ENCODE measurements at regions of chr1 and their contacts with region 1.

Region 1: GRCh38 chr1:61588736-61589672 is 135.9 kb downstream of the TM2D1 start:
- DNase-seq: peak; percentile 81
- ATAC-seq: peak; percentile 97
- H3K4me3 Mint-ChIP-seq: no peak overlapping the region
- H3K27ac Mint-ChIP-seq: no peak overlapping the region
- H3K4me1 Mint-ChIP-seq: no peaks in the 10 kb centered on the region
- H3K27me3 Mint-ChIP-seq: peaks cover 5% of the 10 kb centered on the region

Region 2: DNA sequence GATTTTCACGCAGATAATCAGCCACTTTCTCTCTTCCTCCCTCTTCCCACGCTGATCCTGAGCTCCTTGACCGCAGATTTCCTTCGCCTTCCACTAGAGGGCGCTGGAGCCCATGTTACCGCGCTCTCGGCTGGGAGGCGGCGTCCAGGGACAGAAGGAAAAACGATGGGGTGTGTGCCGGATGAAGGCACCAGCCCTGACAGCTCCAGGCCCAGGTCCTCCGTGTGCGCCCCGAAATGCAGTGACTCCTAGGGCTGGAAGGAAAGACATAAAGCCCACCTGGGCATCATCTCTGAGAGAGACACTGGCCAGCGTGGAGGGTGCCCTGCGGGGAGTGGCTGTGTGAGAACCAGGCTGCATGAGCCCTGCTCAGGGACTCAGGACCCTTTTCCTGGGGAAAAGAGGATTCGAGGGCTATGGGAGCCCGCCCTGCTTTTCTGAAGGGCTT is 1617.5 kb before region 1 on chr1:
- CTCF ChIA-PET with region 1: no interaction called
- POLR2A ChIA-PET with region 1: no interaction called
- intact Hi-C with region 1: loop called in 1 of 2 experiments (anchors 5 kb)
- DNase-seq: peak; percentile 74
- ATAC-seq: peak; percentile 47
- H3K4me3 Mint-ChIP-seq: no peak overlapping the region
- H3K27ac Mint-ChIP-seq: no peak overlapping the region
- H3K4me1 Mint-ChIP-seq: peaks cover 5% of the 10 kb centered on the region
- H3K27me3 Mint-ChIP-seq: peaks cover 21% of the 10 kb centered on the region

Region 3: DNA sequence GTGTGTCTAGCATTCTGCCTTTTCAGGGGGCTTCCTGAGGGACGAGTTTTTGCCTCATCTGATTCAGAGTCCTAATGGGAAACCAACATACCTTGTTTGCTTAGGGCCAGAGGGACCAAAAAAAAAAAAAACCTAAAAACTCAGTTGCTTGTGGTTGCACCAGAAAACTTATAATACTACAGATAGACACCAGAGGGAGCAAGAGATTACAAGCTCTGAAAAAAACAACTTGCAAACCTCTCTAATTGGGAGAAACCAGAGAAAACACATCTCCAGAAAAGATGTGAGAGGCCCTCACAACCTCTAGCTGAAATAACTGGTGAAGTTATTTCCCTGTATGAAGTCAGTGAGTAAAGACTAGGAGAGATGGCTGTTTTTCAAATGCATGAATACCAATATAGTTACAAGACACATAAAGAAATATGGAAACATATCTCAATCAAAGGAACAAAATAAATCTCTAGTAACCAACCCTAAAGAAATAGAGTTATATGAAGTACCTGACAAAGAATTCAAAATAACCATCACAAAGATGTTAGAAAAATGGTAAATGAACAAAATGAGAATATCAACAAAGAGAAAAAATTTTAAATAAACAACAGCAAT is 740.3 kb before region 1 on chr1:
- CTCF ChIA-PET with region 1: interaction called, 5 read pairs
- POLR2A ChIA-PET with region 1: no interaction called
- intact Hi-C with region 1: loop called (anchors 1 to 5 kb)
- DNase-seq: no peak
- ATAC-seq: no peak
- H3K4me3 Mint-ChIP-seq: no peak overlapping the region
- H3K27ac Mint-ChIP-seq: no peak overlapping the region
- H3K4me1 Mint-ChIP-seq: no peaks in the 10 kb centered on the region
- H3K27me3 Mint-ChIP-seq: peaks cover 10% of the 10 kb centered on the region

Region 4: GRCh38 chr1:60969971-60970509 is 619.0 kb before region 1 on chr1:
- CTCF ChIA-PET with region 1: no interaction called
- POLR2A ChIA-PET with region 1: no interaction called
- intact Hi-C with region 1: loop called in 1 of 2 experiments (anchors 1 kb)
- DNase-seq: no peak
- ATAC-seq: no peak
- H3K4me3 Mint-ChIP-seq: no peak overlapping the region
- H3K27ac Mint-ChIP-seq: no peak overlapping the region
- H3K4me1 Mint-ChIP-seq: no peaks in the 10 kb centered on the region
- H3K27me3 Mint-ChIP-seq: peaks cover 16% of the 10 kb centered on the region

Region 5: GRCh38 chr1:61641578-61642336 is 52.8 kb after region 1 on chr1:
- CTCF ChIA-PET with region 1: interaction called, 12 read pairs
- POLR2A ChIA-PET with region 1: no interaction called
- intact Hi-C with region 1: no loop called
- DNase-seq: peak; percentile 83
- ATAC-seq: peak; percentile 97
- H3K4me3 Mint-ChIP-seq: peak overlapping the region; percentile 54
- H3K27ac Mint-ChIP-seq: peak overlapping the region; percentile 61
- H3K4me1 Mint-ChIP-seq: peaks cover 11% of the 10 kb centered on the region
- H3K27me3 Mint-ChIP-seq: no peaks in the 10 kb centered on the region